Ascending aorta (tissue), 2 donors: ENCODE measurements at regions of chr3 and their contacts with region 1.

Region 1: GRCh38 chr3:57100046-57100695 is 39.7 kb downstream of the SPATA12 start:
- DNase-seq: peak in 1 of 2 donors; percentile 84
- H3K4me3 ChIP-seq: no peak overlapping the region
- H3K27ac ChIP-seq: no peak overlapping the region
- H3K4me1 ChIP-seq: no peaks in the 10 kb centered on the region
- H3K27me3 ChIP-seq: no peaks in the 10 kb centered on the region
- CTCF ChIP-seq: peak; percentile 68 to 91 (median 83)

Region 2: DNA sequence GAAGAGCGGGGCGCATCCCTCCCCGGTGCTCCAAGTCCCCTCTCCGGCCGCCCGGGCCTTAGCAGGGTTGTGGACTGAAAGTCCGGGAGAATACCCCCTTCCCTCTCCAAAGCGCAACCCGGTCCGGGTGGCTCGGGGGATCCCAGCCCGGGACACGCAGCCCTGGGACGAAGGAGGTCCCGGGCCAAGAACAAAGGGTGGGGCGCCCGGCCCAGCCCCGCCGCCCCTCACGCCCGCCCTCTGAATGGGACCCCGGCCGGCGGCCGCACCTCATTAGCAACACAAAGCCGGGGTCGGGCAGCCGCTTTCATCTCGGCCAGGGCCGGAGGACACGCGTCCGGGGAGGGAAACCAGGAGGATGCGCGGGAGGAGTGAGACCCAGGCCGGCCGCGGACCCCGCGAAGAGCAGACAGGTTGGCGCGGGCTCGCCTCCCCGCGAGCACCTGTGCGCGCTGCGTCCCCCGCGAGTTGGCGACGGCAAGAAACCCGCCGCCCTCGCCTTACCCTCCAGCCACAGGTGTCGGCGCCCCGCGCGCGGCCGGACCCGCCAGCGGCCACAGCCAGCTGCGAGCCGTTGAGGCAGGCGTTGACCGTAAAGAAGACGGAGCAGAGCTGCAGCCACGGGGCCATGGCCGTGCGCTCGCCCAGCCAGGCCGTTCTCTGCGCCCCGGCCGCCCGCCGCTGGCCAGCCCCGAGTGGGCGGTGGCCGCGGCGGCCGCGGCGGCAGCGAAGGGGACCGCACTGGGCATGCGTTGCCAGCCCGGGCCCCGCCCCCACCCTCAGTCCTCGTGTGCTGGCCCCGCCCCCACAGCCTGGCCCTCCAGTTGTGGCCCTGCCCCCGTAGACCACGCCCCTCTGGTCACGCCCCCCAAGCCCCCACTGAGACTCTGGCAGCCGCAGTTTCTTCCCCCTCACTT is 64.7 kb after region 1 on chr3 and contains the start of gene IL17RD:
- intact Hi-C with region 1: loop called (anchors 5 kb)
- DNase-seq: peak in 1 of 2 donors; percentile 86
- H3K4me3 ChIP-seq: peak within 1 kb of the TSS; percentile 92 to 95
- H3K27ac ChIP-seq: peak within 1 kb of the TSS in 1 of 2 donors; percentile 16
- H3K4me1 ChIP-seq: peaks cover 4 to 6% of the 10 kb centered on the region in 2 donors
- H3K27me3 ChIP-seq: no peaks in the 10 kb centered on the region
- CTCF ChIP-seq: no peak
- total RNA-seq, gene IL17RD: 3.4 TPM